ENCODE measurements at regions of chrX and their contacts with region 1.

Region 1: DNA sequence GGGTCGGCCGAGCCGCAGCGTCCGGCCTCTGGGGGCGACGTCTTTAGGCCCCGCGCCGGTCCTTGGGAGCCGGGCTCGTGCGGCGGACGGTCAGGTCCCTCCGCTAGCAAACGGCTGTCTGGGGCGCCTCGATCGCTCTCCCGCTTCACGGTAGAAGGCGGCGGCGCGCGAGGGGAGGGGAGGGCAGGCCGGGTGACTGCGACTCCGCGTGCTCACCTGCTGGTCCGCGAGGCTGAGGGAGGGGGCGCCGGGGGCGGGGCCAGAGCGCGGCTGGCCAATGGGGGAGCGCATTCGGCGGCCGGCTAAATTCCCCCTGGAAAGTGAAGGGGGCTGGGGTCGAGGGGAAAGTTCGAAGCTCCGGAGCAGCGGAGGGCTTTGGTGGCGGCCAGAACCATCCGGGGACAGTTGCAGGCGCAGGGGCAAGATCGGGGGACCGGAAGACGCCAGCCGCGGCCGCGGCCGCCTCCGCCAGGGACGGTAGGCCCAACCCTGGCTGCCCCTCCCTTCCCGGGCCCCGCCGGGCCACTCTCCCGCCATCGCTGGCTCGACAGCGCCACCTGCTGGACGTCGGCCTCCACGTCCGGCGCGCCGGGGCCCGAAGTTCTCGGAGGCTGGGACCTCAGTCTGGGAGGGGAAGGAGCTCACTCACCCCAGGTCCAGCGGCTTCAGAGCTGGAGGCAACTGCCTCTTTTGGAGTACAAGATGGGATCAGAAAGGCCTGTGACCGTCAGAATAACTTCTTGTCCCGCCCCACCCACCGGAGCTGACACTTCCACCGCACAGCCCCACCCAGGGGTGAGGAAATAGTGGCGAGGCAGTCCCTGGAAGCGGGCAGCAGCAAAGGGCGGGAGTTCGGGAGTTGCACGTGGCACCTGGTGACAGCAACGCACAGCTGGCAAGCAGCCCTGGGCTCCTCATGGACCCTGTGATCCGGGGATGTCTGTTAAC is 49.9 kb downstream of the ELF4 start:
- DNase-seq: peak; percentile 98
- H3K4me3 ChIP-seq: peak overlapping the region; percentile 46 to 60
- H3K27ac ChIP-seq: no peak overlapping the region
- H3K4me1 ChIP-seq: peaks cover 0 to 4% of the 10 kb centered on the region in 2 experiments; a peak in 1 of 4 replicates
- H3K27me3 ChIP-seq: no peaks in the 10 kb centered on the region; the same call in 1 of the 2 replicates
- CTCF ChIP-seq: peak; percentile 88
- EP300 ChIP-seq: no peak
- RAD21 ChIP-seq: peak; percentile 79

Region 2: GRCh38 chrX:129606918-129607317 is 453.5 kb before region 1 on chrX:
- CTCF ChIA-PET with region 1: interaction called, 20 read pairs
- POLR2A ChIA-PET with region 1: no interaction called
- DNase-seq: peak; percentile 72
- H3K4me3 ChIP-seq: no peak overlapping the region
- H3K27ac ChIP-seq: no peak overlapping the region
- H3K4me1 ChIP-seq: peaks cover 0 to 3% of the 10 kb centered on the region in 2 experiments; a peak in 1 of 4 replicates
- H3K27me3 ChIP-seq: no peaks in the 10 kb centered on the region; the same call in 1 of the 2 replicates
- CTCF ChIP-seq: peak; percentile 83
- EP300 ChIP-seq: no peak
- RAD21 ChIP-seq: peak; percentile 91

Region 3: GRCh38 chrX:129931411-129932015 is 128.9 kb before region 1 on chrX:
- CTCF ChIA-PET with region 1: interaction called, 22 read pairs
- POLR2A ChIA-PET with region 1: no interaction called
- DNase-seq: peak; percentile 86
- H3K4me3 ChIP-seq: peak overlapping the region; percentile 57 to 63
- H3K27ac ChIP-seq: peak overlapping the region; percentile 77 to 87
- H3K4me1 ChIP-seq: no peaks in the 10 kb centered on the region; a peak in 1 of 4 replicates
- H3K27me3 ChIP-seq: peaks cover 11% of the 10 kb centered on the region; the same call in 1 of the 2 replicates
- CTCF ChIP-seq: no peak
- EP300 ChIP-seq: 0 out of 4 replicates have a peak, but pooled peaks of 1 of the 2 experiments have one; percentile 6
- RAD21 ChIP-seq: no peak

Region 4: DNA sequence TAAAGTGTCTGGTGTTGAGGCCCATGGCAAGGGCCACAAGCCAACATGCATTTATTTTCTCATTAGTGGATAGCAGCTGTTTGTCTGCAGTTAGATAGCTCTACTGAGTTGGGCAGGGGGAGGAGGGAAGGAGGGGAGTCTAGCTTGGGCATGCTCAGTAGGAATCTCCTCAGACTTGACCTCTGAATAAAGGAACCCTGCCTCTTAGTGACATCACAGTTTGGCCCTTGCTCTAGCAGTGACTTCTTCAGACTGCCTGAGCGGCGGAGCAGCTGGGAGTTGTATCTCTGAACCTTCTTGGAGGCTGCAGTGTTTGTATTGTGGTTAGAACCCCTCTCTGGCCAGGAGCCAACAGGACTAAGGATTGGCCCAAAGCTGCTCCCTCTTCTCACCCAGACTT is 20.5 kb before region 1 on chrX:
- CTCF ChIA-PET with region 1: interaction called, 27 read pairs
- POLR2A ChIA-PET with region 1: no interaction called
- DNase-seq: no peak
- H3K4me3 ChIP-seq: no peak overlapping the region
- H3K27ac ChIP-seq: no peak overlapping the region
- H3K4me1 ChIP-seq: no peaks in the 10 kb centered on the region
- H3K27me3 ChIP-seq: peaks cover 6% of the 10 kb centered on the region
- CTCF ChIP-seq: no peak
- EP300 ChIP-seq: no peak
- RAD21 ChIP-seq: no peak

Region 5: DNA sequence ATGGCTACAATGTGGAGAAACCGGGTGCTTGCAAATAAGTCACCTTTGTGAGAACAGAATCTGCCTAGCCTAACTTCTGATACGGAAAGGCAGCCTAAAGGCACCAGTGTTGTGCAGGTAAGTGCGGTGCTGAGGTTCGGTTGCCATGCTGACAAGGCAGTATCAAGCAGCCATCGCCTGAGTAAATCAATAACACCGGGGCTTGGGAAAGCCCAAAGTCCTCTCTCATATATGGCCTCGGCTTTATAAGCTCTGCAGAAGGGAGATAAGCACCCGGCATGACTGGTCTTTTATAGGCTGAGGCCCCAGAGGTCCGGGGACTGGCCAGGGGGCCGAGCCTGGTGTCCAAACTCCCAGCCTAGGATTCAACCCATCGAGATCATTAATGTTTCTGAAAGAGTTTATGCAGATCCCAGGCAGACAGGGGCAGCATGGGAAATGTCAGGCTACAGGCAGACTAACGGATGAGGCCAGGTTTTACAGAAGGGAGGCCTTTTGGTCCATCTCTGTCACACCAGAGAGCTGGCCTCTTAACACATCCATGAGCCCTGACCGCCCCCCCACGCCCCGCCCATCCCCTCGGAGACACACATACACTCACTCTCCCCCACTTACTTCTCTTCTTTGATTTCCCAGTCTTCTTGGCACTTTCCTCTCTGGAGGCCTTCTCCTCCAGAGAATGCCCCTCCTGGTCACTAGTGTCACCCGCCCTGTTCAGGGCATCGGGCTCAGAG is 11.4 kb after region 1 on chrX:
- CTCF ChIA-PET with region 1: interaction called, 12 read pairs
- POLR2A ChIA-PET with region 1: no interaction called
- DNase-seq: no peak
- H3K4me3 ChIP-seq: no peak overlapping the region
- H3K27ac ChIP-seq: no peak overlapping the region
- H3K4me1 ChIP-seq: no peaks in the 10 kb centered on the region
- H3K27me3 ChIP-seq: no peaks in the 10 kb centered on the region; the same call in 1 of the 2 replicates
- CTCF ChIP-seq: no peak
- EP300 ChIP-seq: no peak
- RAD21 ChIP-seq: no peak

Measured in SK-N-SH (cell line).